ENCODE measurements at regions of chr9 and their contacts with region 1.

Region 1: DNA sequence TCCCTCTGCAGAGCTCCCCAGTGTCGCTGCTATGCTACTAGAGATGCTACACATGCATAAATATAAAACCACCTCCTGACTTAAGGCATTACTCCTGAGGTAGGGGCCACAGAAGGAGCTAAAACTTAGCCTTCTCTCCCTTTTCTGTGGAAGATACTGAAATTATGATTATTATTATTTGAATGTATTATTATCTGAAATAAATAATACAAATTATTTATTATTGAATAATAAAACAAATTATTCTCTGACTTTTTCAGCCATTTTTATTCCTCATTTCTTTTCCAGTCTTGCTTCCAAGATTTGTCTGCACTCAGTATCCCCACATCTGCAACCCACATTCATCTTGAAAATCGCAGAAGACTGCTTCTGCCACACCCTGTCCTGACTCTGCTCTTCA is 414.9 kb upstream of the ACO1 start:
- DNase-seq: no peak
- H3K4me3 Mint-ChIP-seq: no peak overlapping the region
- H3K27ac Mint-ChIP-seq: no peak overlapping the region
- H3K4me1 Mint-ChIP-seq: no peaks in the 10 kb centered on the region
- H3K27me3 Mint-ChIP-seq: peaks cover 2% of the 10 kb centered on the region

Region 2: GRCh38 chr9:31908158-31908890 is 61.2 kb before region 1 on chr9:
- CTCF ChIA-PET with region 1: no interaction called
- intact Hi-C with region 1: loop called (anchors 10 kb)
- DNase-seq: no peak
- H3K4me3 Mint-ChIP-seq: no peak overlapping the region
- H3K27ac Mint-ChIP-seq: no peak overlapping the region
- H3K4me1 Mint-ChIP-seq: no peaks in the 10 kb centered on the region
- H3K27me3 Mint-ChIP-seq: no peaks in the 10 kb centered on the region

Region 3: GRCh38 chr9:31983895-31984294 is 14.3 kb after region 1 on chr9:
- CTCF ChIA-PET with region 1: no interaction called
- intact Hi-C with region 1: no loop called
- DNase-seq: no peak
- H3K4me3 Mint-ChIP-seq: no peak overlapping the region
- H3K27ac Mint-ChIP-seq: no peak overlapping the region
- H3K4me1 Mint-ChIP-seq: no peaks in the 10 kb centered on the region
- H3K27me3 Mint-ChIP-seq: no peaks in the 10 kb centered on the region

Region 4: GRCh38 chr9:32045513-32045912 is 76.0 kb after region 1 on chr9:
- CTCF ChIA-PET with region 1: no interaction called
- intact Hi-C with region 1: loop called (anchors 10 kb)
- DNase-seq: no peak
- H3K4me3 Mint-ChIP-seq: no peak overlapping the region
- H3K27ac Mint-ChIP-seq: no peak overlapping the region
- H3K4me1 Mint-ChIP-seq: no peaks in the 10 kb centered on the region
- H3K27me3 Mint-ChIP-seq: peaks cover 2% of the 10 kb centered on the region

Region 5: GRCh38 chr9:33202552-33203201 is 1233.1 kb after region 1 on chr9:
- CTCF ChIA-PET with region 1: no interaction called
- intact Hi-C with region 1: no loop called
- DNase-seq: peak; percentile 48
- H3K4me3 Mint-ChIP-seq: no peak overlapping the region
- H3K27ac Mint-ChIP-seq: no peak overlapping the region
- H3K4me1 Mint-ChIP-seq: peaks cover 11% of the 10 kb centered on the region
- H3K27me3 Mint-ChIP-seq: no peaks in the 10 kb centered on the region